IMR-90 (cell line): ENCODE measurements at regions of chr15 and their contacts with region 1.

Region 1: DNA sequence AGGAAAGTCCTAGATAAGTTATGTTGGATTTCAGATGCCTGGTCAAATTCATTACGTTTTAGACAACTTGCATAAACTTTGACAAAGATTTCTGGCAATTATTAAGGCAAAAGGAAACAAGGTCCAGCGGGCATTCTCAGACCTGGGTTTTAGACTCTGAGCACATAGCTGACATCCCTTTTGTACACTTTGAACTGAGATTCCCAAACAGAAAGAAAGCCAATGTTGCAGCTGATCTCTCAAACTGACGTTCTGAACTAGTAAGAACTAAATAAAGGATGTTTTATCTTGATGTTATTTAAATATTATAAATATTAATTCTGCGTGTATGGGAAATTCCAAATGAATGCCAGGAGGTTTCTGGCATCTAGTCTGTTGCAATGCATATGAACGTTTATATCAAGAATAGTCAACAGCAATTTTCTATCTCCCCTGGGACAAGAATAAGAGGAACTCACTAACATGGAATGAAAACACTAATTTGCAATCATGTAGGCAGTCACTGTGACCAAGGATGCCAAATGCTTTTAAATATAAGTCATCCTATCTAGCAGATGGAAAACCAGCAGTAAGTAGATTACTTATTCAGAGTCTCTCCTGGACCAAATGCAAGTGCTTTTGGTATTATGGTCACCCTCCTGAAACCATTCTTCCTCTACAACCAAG is 202.1 kb downstream of the GREM1 start:
- DNase-seq: peak; percentile 99
- ATAC-seq: peak; percentile 88
- H3K4me3 ChIP-seq: no peak overlapping the region
- H3K27ac ChIP-seq: peak overlapping the region; percentile 90
- H3K4me1 ChIP-seq: peaks cover 32% of the 10 kb centered on the region
- H3K27me3 ChIP-seq: no peaks in the 10 kb centered on the region
- CTCF ChIP-seq: no peak
- POLR2A ChIP-seq: peak; percentile 45; the same call in 1 of the 2 replicates
- RAD21 ChIP-seq: no peak; the same call in 1 of the 2 replicates

Region 2: GRCh38 chr15:32908872-32909271 is 11.0 kb before region 1 on chr15:
- CTCF ChIA-PET with region 1: no interaction called
- POLR2A ChIA-PET with region 1: no interaction called
- dilution Hi-C with region 1: no loop called
- in situ Hi-C with region 1: no loop called
- intact Hi-C with region 1: loop called (anchors 1 kb)
- DNase-seq: no peak
- ATAC-seq: no peak
- H3K4me3 ChIP-seq: no peak overlapping the region
- H3K27ac ChIP-seq: peak overlapping the region; percentile 92
- H3K4me1 ChIP-seq: peaks cover 28% of the 10 kb centered on the region
- H3K27me3 ChIP-seq: no peaks in the 10 kb centered on the region
- CTCF ChIP-seq: no peak
- POLR2A ChIP-seq: no peak; the same call in 1 of the 2 replicates
- RAD21 ChIP-seq: no peak

Region 3: GRCh38 chr15:32979710-32980109 is 59.8 kb after region 1 on chr15:
- CTCF ChIA-PET with region 1: no interaction called
- POLR2A ChIA-PET with region 1: no interaction called
- dilution Hi-C with region 1: no loop called
- in situ Hi-C with region 1: no loop called
- intact Hi-C with region 1: loop called (anchors 1 kb)
- DNase-seq: peak; percentile 98
- ATAC-seq: peak; percentile 91
- H3K4me3 ChIP-seq: no peak overlapping the region
- H3K27ac ChIP-seq: peak overlapping the region; percentile 70; the same call in 1 of the 2 replicates
- H3K4me1 ChIP-seq: peaks cover 16% of the 10 kb centered on the region
- H3K27me3 ChIP-seq: no peaks in the 10 kb centered on the region
- CTCF ChIP-seq: no peak
- POLR2A ChIP-seq: no peak
- RAD21 ChIP-seq: no peak